H1 (cell line): ENCODE measurements at regions of chr7 and their contacts with region 1.

Region 1: DNA sequence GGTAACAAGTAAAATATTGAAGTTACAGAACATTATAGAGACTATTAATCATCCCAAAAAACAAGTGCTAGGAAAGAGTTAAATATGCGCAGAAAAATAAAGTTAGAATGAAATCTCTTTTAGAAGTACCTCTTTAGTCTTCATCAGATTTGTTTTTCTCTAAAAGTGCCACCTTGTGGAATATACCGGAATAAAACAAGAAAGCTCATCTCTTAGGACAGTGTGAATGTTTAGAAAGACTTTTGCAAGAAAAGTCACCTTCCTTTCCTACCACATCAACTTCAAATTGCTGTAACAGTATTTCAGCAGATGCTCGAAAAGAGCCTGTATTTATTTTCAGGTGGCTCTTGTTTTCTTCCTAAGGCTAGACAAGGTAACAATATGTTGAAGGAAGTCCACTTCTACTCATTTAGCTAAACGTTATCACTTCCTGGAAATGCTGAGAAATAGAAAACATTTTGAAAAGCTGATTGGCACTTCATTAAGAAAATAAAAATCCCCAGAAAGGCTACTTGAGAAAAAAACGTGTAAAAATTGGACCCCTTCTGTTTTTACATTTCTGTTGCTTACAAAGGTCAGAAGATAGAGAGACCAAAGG is 19.8 kb upstream of the FAM133B start:
- DNase-seq: no peak
- H3K4me3 ChIP-seq: no peak overlapping the region
- H3K27ac ChIP-seq: no peak overlapping the region
- H3K4me1 ChIP-seq: peaks cover 0 to 4% (median 0%) of the 10 kb centered on the region in 4 experiments; a peak in 2 of 7 replicates
- H3K27me3 ChIP-seq: no peaks in the 10 kb centered on the region
- CTCF ChIP-seq: peak in 2 of 3 experiments; percentile 11 to 34; a peak in 2 of 4 replicates
- EP300 ChIP-seq: no peak
- POLR2A ChIP-seq: no peak
- RAD21 ChIP-seq: no peak; a peak in 1 of 4 replicates

Region 2: GRCh38 chr7:92590711-92591310 is 19.2 kb before region 1 on chr7:
- CTCF ChIA-PET with region 1: interaction called, 84 read pairs
- POLR2A ChIA-PET with region 1: interaction called, 27 read pairs
- DNase-seq: no peak
- H3K4me3 ChIP-seq: peak overlapping the region in 3 of 4 experiments; percentile 93 to 96 (median 93); a peak in 6 of 8 replicates
- H3K27ac ChIP-seq: no peak overlapping the region
- H3K4me1 ChIP-seq: peaks cover 0 to 5% (median 0%) of the 10 kb centered on the region in 4 experiments; a peak in 3 of 7 replicates
- H3K27me3 ChIP-seq: peaks cover 2 to 14% (median 8%) of the 10 kb centered on the region in 4 experiments; a peak in 6 of 7 replicates
- CTCF ChIP-seq: no peak
- EP300 ChIP-seq: no peak
- POLR2A ChIP-seq: no peak
- RAD21 ChIP-seq: no peak

Region 3: DNA sequence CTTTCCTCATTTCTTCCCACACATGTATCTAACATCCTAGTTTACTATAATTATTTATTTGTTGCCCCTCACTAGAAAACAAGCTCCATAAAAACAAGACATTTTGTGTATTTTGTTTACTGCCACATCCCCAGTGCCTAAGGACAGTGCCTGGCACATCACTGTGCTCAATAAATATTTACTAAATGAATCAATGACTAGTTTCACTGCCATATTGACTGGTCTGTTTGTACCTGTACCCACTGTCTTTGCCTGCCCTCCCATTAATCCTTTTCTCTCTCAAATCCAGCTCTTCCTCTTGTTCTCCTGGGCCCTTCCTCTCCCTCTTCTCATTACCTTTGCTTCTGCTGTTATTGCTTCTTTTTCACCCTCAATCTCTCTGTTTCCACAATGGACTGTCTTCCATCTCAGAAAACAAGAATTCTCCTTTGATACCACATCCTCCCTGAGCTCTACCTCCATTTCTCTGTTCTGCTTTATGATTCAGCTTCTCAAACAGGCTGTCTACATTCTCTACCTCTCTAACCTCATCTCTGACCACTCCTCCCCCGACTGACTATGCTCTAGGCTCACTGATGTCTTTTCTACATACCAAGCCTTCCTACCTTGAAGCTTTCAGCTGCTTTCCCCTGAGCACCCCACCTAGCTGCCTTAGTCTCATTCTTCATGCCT is 11.6 kb before region 1 on chr7:
- CTCF ChIA-PET with region 1: interaction called, 84 read pairs
- POLR2A ChIA-PET with region 1: interaction called, 3 read pairs
- DNase-seq: no peak
- H3K4me3 ChIP-seq: no peak overlapping the region
- H3K27ac ChIP-seq: no peak overlapping the region
- H3K4me1 ChIP-seq: no peaks in the 10 kb centered on the region
- H3K27me3 ChIP-seq: no peaks in the 10 kb centered on the region
- CTCF ChIP-seq: no peak
- EP300 ChIP-seq: no peak
- POLR2A ChIP-seq: no peak
- RAD21 ChIP-seq: no peak

Region 4: GRCh38 chr7:92621026-92621540 is 11.1 kb after region 1 on chr7:
- CTCF ChIA-PET with region 1: interaction called, 38 read pairs
- POLR2A ChIA-PET with region 1: no interaction called
- DNase-seq: peak in 1 of 2 experiments; percentile 56
- H3K4me3 ChIP-seq: no peak overlapping the region
- H3K27ac ChIP-seq: no peak overlapping the region
- H3K4me1 ChIP-seq: no peaks in the 10 kb centered on the region
- H3K27me3 ChIP-seq: no peaks in the 10 kb centered on the region
- CTCF ChIP-seq: peak in 2 of 3 experiments; percentile 62 to 72; a peak in 3 of 4 replicates
- EP300 ChIP-seq: no peak
- POLR2A ChIP-seq: no peak
- RAD21 ChIP-seq: peak; percentile 88 to 91

Region 5: DNA sequence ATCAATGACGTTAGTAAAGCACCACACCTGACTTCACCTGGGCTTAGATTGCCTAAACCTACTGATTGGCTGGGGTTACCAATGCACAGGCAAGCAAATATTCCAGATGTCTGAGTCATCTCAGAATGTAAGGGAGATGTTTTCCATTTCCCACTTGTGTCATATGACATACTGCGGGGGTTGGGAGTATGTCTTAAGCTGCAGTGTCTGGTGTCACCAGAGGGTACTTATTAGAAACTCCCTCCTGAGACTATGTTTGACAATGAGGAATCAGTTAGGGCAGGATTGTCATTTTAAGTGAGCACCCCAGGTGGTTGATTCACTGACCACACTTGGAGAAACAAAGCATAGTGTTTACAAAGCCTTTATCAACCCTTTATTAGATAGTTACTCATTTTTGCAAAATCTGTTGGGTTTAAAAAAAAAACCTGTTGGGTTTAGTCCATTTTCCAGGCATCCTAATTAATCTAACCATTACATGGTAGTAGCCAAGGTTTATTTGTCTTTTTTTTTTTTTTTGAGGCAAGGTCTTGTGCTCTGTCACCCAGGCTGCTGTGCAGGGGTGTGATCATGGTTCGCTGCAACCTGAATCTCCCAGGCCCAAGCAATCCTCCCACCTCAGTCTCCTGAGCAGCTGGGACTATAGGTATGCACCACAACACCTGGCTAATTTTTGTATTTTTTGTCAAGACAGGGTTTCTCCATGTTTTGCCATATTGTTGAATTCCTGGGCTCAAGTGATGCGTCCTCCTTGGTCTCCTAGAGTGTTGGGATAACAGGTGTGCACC is 153.8 kb after region 1 on chr7:
- CTCF ChIA-PET with region 1: no interaction called
- POLR2A ChIA-PET with region 1: no interaction called
- DNase-seq: peak; percentile 70 to 74
- H3K4me3 ChIP-seq: peak overlapping the region in 2 of 4 experiments; percentile 9 to 43; a peak in 3 of 8 replicates
- H3K27ac ChIP-seq: peak overlapping the region; percentile 48; the same call in 1 of the 2 replicates
- H3K4me1 ChIP-seq: peaks cover 3 to 29% (median 20%) of the 10 kb centered on the region in 4 experiments; a peak in 4 of 7 replicates
- H3K27me3 ChIP-seq: no peaks in the 10 kb centered on the region
- CTCF ChIP-seq: no peak
- EP300 ChIP-seq: peak in 1 of 2 experiments; percentile 96; a peak in 2 of 3 replicates
- POLR2A ChIP-seq: no peak
- RAD21 ChIP-seq: no peak; a peak in 1 of 4 replicates

Region 6: DNA sequence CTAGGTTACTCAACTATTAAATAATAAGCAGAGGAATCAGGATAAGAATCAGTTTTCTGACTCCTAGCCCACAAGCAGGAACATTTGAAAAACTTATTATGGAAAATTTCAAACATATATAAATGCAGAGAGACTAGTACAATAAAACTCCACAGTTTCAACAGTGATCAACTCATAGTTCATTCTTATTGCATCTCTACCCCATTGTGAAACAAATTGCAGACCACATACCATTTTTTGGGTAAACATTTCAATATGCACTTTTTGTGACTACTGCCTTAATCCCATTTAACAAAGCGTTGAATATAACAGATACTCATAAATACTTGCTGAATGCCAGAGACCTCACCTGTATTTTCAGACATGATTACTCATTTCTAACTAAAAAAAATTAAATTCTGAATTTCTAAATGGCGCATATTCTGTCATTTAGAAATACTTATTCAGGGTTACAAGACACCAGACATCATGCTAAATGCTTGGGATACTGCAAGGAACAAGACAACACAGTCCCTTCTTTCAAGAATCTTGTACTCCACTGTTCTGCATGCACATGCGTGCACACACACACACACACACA is 215.0 kb after region 1 on chr7:
- CTCF ChIA-PET with region 1: no interaction called
- POLR2A ChIA-PET with region 1: no interaction called
- DNase-seq: no peak
- H3K4me3 ChIP-seq: no peak overlapping the region
- H3K27ac ChIP-seq: no peak overlapping the region
- H3K4me1 ChIP-seq: peaks cover 0 to 8% (median 1%) of the 10 kb centered on the region in 4 experiments; a peak in 3 of 7 replicates
- H3K27me3 ChIP-seq: no peaks in the 10 kb centered on the region
- CTCF ChIP-seq: no peak
- EP300 ChIP-seq: no peak
- POLR2A ChIP-seq: no peak
- RAD21 ChIP-seq: no peak